ENCODE measurements at regions of chr9 and their contacts with region 1.

Region 1: GRCh38 chr9:130042833-130043653 is at the start of gene FNBP1:
- DNase-seq: peak; percentile 95
- H3K4me3 ChIP-seq: peak within 1 kb of the TSS; percentile 72 to 92 (median 78)
- H3K27ac ChIP-seq: peak within 1 kb of the TSS; percentile 87 to 99 (median 98)
- H3K4me1 ChIP-seq: peaks cover 25 to 81% (median 63%) of the 10 kb centered on the region in 6 donors
- H3K27me3 ChIP-seq: no peaks in the 10 kb centered on the region
- CTCF ChIP-seq: peak in 1 of 11 experiments; percentile 22
- POLR2A ChIP-seq: peak; percentile 61 to 89 (median 68)
- total RNA-seq, gene FNBP1: 132 to 156 (median 148) TPM

Region 2: GRCh38 chr9:129962889-129963703 is 79.9 kb before region 1 on chr9:
- intact Hi-C with region 1: no loop called
- DNase-seq: peak; percentile 85
- H3K4me3 ChIP-seq: peak overlapping the region; percentile 22 to 65 (median 36)
- H3K27ac ChIP-seq: peak overlapping the region; percentile 81 to 96 (median 94)
- H3K4me1 ChIP-seq: peaks cover 22 to 93% (median 52%) of the 10 kb centered on the region in 6 donors
- H3K27me3 ChIP-seq: no peaks in the 10 kb centered on the region
- CTCF ChIP-seq: peak in 1 of 11 experiments; percentile 12
- POLR2A ChIP-seq: peak in 1 of 3 donors; percentile 67

Region 3: DNA sequence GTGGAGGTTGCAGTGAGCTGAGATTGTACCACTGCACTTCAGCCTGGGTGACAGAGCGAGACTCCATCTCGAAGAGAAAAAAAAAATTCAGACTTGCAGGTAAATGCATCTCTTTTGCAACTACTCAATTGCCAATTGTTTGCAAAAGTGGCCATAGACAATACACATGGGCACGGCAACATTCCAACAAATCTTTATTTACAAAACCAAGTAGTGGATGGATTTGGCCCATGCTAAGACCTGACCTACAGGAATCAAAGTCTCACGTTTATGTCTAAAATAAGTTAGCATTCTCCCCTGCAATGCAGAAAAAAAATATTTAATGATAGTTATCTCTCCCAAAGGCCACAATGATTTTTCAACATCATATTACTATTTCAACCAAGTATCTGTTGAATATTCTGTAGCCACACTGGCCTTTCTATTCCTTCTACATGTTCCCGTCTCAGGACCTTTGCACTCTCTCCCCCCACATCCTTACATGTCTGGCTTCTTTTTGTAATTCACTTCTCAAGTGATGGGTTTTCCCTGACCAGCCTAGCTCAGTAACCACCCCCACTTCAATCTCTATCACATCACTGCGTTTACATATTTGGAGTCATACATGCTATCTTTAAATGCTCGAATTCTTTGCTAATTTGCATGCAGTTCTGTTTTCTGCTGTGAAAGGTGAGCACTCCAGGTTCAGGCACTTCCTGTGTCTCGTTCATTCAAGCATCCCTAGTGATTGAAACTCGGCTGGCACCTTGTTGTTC is 54.3 kb before region 1 on chr9:
- intact Hi-C with region 1: loop called (anchors 10 kb)
- DNase-seq: no peak
- H3K4me3 ChIP-seq: peak overlapping the region in 1 of 8 donors; percentile 40
- H3K27ac ChIP-seq: peak overlapping the region; percentile 35 to 91 (median 86)
- H3K4me1 ChIP-seq: peaks cover 42 to 100% (median 69%) of the 10 kb centered on the region in 6 donors
- H3K27me3 ChIP-seq: no peaks in the 10 kb centered on the region
- CTCF ChIP-seq: no peak
- POLR2A ChIP-seq: peak in 1 of 3 donors; percentile 40

Region 4: DNA sequence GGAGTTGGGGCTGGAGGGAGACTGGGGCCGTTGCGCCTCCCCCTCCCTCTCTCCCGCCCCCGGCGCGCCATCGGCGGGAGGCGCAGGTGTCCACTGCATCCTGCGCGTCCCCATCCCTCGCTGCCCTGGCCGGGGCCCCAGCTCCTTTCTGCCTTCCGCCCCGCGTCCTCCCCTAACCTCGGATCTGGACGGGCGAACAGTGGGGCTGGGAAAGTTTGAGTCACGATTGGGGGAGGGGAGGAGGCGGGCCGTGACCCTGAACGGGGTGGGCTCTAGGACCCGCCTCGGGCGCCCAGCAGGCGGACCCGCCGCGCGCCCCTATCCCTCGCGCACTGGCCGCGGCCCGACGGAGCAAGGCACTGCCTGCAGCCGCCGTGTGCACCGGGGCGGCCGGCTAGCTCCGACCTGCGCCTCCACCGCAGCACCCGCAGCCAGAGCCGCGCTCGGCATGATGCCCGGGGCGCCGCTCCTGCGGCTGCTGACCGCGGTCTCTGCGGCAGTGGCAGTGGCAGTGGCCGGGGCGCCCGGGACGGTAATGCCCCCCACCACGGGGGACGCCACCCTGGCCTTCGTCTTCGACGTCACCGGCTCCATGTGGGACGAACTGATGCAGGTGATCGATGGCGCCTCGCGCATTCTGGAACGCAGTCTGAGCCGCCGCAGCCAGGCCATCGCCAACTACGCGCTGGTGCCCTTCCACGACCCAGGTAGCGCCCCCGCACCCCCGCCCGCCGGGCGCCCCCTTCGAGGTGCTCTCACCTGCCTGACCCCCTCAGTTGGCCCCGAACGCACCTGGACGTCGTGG is 222.6 kb after region 1 on chr9 and contains the start of gene HMCN2:
- intact Hi-C with region 1: no loop called
- DNase-seq: peak; percentile 47
- H3K4me3 ChIP-seq: peak within 1 kb of the TSS in 3 of 8 donors; percentile 10 to 35 (median 10)
- H3K27ac ChIP-seq: no peak within 1 kb of the TSS
- H3K4me1 ChIP-seq: peaks cover 0 to 17% (median 13%) of the 10 kb centered on the region in 6 donors
- H3K27me3 ChIP-seq: peaks cover 4 to 97% (median 71%) of the 10 kb centered on the region in 7 donors
- CTCF ChIP-seq: no peak
- POLR2A ChIP-seq: no peak
- total RNA-seq, gene HMCN2: 0.09 to 1.9 (median 0.67) TPM

Measured in spleen (tissue), 13 donors.